Posterior cingulate gyrus (tissue), 11 donors: ENCODE measurements at regions of chr10 and their contacts with region 1.

Region 1: GRCh38 chr10:127906548-127907377 is at the start of gene PTPRE:
- DNase-seq: peak in 9 of 10 donors; percentile 40 to 96 (median 66)

Region 2: GRCh38 chr10:128011175-128011979 is 104.6 kb after region 1 on chr10:
- intact Hi-C with region 1: loop called (anchors 1 kb)
- DNase-seq: peak; percentile 67 to 97 (median 85)